CD8-positive, alpha-beta memory T cell (primary cell): ENCODE measurements at regions of chr15 and their contacts with region 1.

Region 1: GRCh38 chr15:51982013-51982769 is 10.6 kb upstream of the LEO1 start:
- DNase-seq: peak in 3 of 5 donors; percentile 53 to 62 (median 55)
- H3K4me3 ChIP-seq: no peak overlapping the region
- H3K4me3 Mint-ChIP-seq: peak overlapping the region in 5 of 7 donors; percentile 62 to 74 (median 71)
- H3K27ac ChIP-seq: peak overlapping the region; percentile 55
- H3K27ac Mint-ChIP-seq: peak overlapping the region in 7 of 8 donors; percentile 61 to 90 (median 82)
- H3K4me1 ChIP-seq: peaks cover 8% of the 10 kb centered on the region
- H3K4me1 Mint-ChIP-seq: peaks cover 10 to 11% (median 10%) of the 10 kb centered on the region in 3 donors
- H3K27me3 ChIP-seq: no peaks in the 10 kb centered on the region
- H3K27me3 Mint-ChIP-seq: no peaks in the 10 kb centered on the region

Region 2: GRCh38 chr15:52010633-52011595 is 28.7 kb after region 1 on chr15:
- CTCF ChIA-PET with region 1: no interaction called
- POLR2A ChIA-PET with region 1: no interaction called
- DNase-seq: no peak
- H3K4me3 ChIP-seq: no peak overlapping the region
- H3K4me3 Mint-ChIP-seq: no peak overlapping the region
- H3K27ac ChIP-seq: no peak overlapping the region
- H3K27ac Mint-ChIP-seq: no peak overlapping the region
- H3K4me1 ChIP-seq: peaks cover 8% of the 10 kb centered on the region
- H3K4me1 Mint-ChIP-seq: peaks cover 10 to 28% (median 26%) of the 10 kb centered on the region in 3 donors
- H3K27me3 ChIP-seq: no peaks in the 10 kb centered on the region
- H3K27me3 Mint-ChIP-seq: no peaks in the 10 kb centered on the region

Region 3: DNA sequence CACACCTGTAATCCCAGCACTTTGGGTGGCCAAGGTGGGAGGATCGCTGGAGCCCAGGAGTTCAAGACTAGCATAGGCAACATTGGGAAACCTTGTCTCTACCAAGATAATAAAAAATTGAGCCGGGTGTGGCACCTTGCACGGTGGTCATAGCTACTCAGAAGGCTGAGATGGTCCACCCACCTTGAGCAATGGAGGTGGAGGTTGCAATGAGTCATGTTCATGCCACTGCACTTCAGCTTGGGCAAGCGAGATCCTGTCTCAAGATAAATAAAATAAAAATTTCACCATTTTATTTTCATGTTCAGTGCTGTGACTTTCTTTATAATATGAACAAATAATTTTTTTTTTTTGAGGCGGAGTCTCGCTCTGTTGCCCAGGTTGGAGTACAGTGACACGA is 49.4 kb after region 1 on chr15:
- CTCF ChIA-PET with region 1: no interaction called
- POLR2A ChIA-PET with region 1: no interaction called
- DNase-seq: no peak
- H3K4me3 ChIP-seq: no peak overlapping the region
- H3K4me3 Mint-ChIP-seq: no peak overlapping the region
- H3K27ac ChIP-seq: no peak overlapping the region
- H3K27ac Mint-ChIP-seq: no peak overlapping the region
- H3K4me1 ChIP-seq: no peaks in the 10 kb centered on the region
- H3K4me1 Mint-ChIP-seq: peaks cover 26 to 59% (median 39%) of the 10 kb centered on the region in 3 donors
- H3K27me3 ChIP-seq: no peaks in the 10 kb centered on the region
- H3K27me3 Mint-ChIP-seq: no peaks in the 10 kb centered on the region

Region 4: GRCh38 chr15:52078876-52079700 is 96.9 kb after region 1 on chr15:
- CTCF ChIA-PET with region 1: interaction called, 25 read pairs
- POLR2A ChIA-PET with region 1: no interaction called
- DNase-seq: peak; percentile 64 to 86 (median 71)
- H3K4me3 ChIP-seq: no peak overlapping the region
- H3K4me3 Mint-ChIP-seq: peak overlapping the region in 1 of 7 donors; percentile 59
- H3K27ac ChIP-seq: no peak overlapping the region
- H3K27ac Mint-ChIP-seq: peak overlapping the region in 1 of 8 donors; percentile 2
- H3K4me1 ChIP-seq: peaks cover 11% of the 10 kb centered on the region
- H3K4me1 Mint-ChIP-seq: peaks cover 16 to 24% (median 20%) of the 10 kb centered on the region in 3 donors
- H3K27me3 ChIP-seq: no peaks in the 10 kb centered on the region
- H3K27me3 Mint-ChIP-seq: no peaks in the 10 kb centered on the region